Left cardiac atrium (tissue), 4 donors: ENCODE measurements at regions of chr1 and their contacts with region 1.

Region 1: DNA sequence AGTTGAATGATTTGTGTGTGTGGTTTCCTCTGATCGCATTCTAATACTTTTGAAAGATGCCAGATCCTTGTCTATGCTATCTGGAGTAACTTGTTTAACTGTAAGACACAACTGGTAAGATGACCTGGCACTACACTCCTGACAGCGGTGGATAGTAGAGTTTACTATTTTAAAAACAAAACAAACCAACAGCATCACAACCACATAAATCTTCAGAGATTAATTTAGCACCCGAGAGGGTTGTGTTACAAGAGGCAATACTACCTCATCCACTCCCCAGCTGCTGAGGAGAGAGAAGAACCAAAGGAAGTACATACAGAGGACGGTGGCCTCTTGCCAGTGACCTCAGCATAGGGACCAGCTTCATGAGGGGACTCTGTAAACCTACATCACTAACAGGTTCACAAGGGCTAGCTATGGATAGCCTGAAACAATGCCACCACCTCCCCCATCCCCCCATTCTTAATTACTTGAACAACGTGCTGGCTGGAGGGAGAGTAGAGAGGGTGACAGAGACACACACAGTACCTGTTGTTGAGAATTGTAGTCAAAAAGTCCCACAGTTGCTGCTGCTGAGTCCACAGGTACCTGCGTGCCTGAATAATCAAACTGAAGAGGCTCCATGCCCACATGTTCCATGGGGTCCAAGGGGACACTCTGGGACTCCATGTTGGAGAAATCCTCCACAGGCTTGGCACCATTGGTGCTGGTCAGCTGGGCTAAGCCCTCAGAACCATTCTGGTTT is 73.5 kb downstream of the PUM1 start:
- DNase-seq: no peak
- ATAC-seq: no peak

Region 2: GRCh38 chr1:30700528-30701257 is 291.3 kb before region 1 on chr1:
- intact Hi-C with region 1: no loop called
- DNase-seq: no peak
- ATAC-seq: peak; percentile 38 to 78

Region 3: GRCh38 chr1:31065310-31066217 is 73.5 kb after region 1 on chr1 and contains the start of gene PUM1:
- intact Hi-C with region 1: loop called in 1 of 2 experiments (anchors 10 kb)
- DNase-seq: peak; percentile 99
- ATAC-seq: peak; percentile 100
- total RNA-seq, gene PUM1: 71.3 to 75.1 TPM

Region 4: DNA sequence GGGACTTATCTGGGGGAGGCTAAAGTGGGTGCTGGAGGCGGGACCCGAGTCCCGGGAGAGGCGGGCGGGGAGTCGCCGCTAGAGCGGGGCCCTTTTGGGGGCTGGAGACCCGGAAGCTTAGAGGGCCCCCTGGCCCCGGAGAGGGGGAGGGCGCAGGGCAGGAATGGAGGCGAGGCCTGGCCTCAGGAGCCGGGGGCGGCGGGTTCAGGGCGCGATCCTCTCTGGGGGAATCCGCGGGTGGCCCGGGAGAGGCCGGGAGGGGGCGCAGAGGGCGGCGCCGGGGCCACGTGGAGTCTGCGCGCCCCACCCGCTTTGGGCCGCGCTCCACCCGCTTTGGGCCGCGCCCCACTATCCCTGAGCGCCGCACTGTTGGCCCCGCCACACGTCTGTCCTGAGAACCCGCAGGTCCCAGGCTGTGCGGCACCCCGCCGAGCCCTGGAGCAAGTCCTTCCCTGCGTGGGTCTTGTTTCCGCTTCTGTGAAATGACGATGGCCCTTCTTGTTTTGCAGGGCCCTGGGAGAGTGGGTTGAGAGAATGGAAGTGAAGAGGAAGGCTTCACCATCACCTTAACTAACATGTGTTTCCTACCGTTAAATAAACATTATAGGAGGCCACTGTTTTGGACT is 163.3 kb after region 1 on chr1:
- intact Hi-C with region 1: loop called in 1 of 2 experiments (anchors 10 kb)
- DNase-seq: peak; percentile 72
- ATAC-seq: peak; percentile 93 to 95